ENCODE measurements at regions of chr3 and their contacts with region 1.

Region 1: DNA sequence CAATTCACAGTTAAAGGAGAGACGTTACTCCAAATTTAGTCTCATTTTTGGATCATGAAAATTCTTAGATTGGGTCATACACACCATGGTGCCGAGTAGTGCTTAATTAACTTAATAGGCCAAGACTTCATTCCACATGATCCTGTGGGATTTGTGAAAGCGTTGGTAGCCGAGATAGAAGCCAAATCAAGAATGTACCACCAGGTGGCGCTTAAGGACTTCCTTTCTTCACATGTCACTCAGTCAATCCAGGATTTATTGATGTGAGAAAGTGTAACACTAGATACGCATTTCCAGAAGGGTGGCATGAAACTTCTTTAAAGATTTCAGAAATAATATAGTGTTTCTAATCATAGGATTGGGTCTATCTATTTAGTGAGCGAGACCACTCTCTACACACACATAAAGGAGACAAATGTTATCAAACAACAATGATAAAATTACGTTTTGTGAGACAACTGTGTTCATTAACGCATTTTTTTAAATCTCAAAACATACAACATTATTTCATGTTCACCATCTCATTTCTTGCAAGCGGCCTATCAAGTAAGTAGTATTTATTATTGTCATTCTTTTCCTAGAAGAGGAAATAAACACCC is 436.1 kb downstream of the CHL1 start:
- DNase-seq: no peak
- ATAC-seq: peak; percentile 21
- H3K4me3 Mint-ChIP-seq: no peak overlapping the region
- H3K27ac Mint-ChIP-seq: no peak overlapping the region
- H3K4me1 Mint-ChIP-seq: no peaks in the 10 kb centered on the region
- H3K27me3 Mint-ChIP-seq: peaks cover 2% of the 10 kb centered on the region
- CTCF ChIP-seq: peak; percentile 23

Region 2: DNA sequence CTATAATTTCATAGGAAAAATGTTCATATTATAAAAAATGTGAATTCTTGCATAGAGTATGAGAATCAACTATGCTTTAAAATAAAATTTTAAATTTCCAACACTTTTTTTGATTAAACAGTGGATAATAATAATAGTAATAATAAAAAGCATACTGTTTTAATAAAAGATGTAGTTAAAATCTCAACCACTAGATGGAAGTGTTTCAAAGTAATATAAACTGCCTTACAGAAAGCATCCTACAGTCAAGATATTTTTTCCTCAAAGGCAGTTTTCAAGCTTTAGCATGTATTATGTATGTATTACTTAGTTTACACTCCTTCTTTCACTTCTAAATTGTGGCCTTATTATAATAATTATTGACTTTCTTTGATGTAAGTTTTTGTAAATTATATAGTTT is 218.6 kb before region 1 on chr3:
- CTCF ChIA-PET with region 1: no interaction called
- POLR2A ChIA-PET with region 1: no interaction called
- intact Hi-C with region 1: loop called (anchors 5 kb)
- DNase-seq: no peak
- ATAC-seq: no peak
- H3K4me3 Mint-ChIP-seq: no peak overlapping the region
- H3K27ac Mint-ChIP-seq: no peak overlapping the region
- H3K4me1 Mint-ChIP-seq: no peaks in the 10 kb centered on the region
- H3K27me3 Mint-ChIP-seq: no peaks in the 10 kb centered on the region
- CTCF ChIP-seq: no peak

Region 3: GRCh38 chr3:2156244-2156847 is 1523.7 kb after region 1 on chr3:
- CTCF ChIA-PET with region 1: no interaction called
- POLR2A ChIA-PET with region 1: no interaction called
- intact Hi-C with region 1: loop called (anchors 5 kb)
- DNase-seq: no peak
- ATAC-seq: no peak
- H3K4me3 Mint-ChIP-seq: no peak overlapping the region
- H3K27ac Mint-ChIP-seq: no peak overlapping the region
- H3K4me1 Mint-ChIP-seq: no peaks in the 10 kb centered on the region
- H3K27me3 Mint-ChIP-seq: no peaks in the 10 kb centered on the region
- CTCF ChIP-seq: no peak

Measured in activated B cell treated with CpG ODN at 0.5 μM for 24 hours (primary cell).